PC-3 (cell line): ENCODE measurements at regions of chr7 and their contacts with region 1.

Region 1: DNA sequence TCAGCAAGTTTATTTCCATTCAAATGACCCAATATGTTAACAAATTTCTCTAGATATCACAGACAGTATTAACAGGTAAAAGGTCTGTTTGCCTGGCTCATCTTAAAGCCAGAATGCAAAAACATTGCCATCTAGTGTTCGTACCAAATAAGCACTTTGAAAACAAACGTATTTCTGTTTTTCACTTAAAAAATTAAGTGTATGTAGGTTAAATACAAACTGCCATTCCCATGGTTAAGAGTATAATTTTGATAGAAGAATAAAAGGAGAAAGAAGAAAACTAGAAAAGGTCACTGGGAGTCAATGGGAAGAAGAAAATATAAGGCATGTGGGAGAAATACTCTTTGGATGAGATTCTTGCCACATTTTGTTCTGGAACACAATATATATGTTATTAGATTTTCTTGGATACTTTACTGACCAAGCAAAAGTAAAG is 51.0 kb downstream of the ORC5 start:
- DNase-seq: peak; percentile 61
- ATAC-seq: 0 out of 2 replicates have a peak, but pooled peaks have one; percentile 45
- H3K4me3 ChIP-seq: no peak overlapping the region
- H3K27ac ChIP-seq: no peak overlapping the region
- H3K4me1 ChIP-seq: no peaks in the 10 kb centered on the region
- H3K27me3 ChIP-seq: no peaks in the 10 kb centered on the region
- CTCF ChIP-seq: peak; percentile 84

Region 2: GRCh38 chr7:103296901-103297836 is 859.7 kb before region 1 on chr7 and contains the start of gene PMPCB:
- CTCF ChIA-PET with region 1: no interaction called
- POLR2A ChIA-PET with region 1: no interaction called
- intact Hi-C with region 1: loop called (anchors 10 kb)
- DNase-seq: peak; percentile 91
- ATAC-seq: peak; percentile 90
- H3K4me3 ChIP-seq: peak within 1 kb of the TSS; percentile 93
- H3K27ac ChIP-seq: peak within 1 kb of the TSS; percentile 39
- H3K4me1 ChIP-seq: peaks cover 12% of the 10 kb centered on the region
- H3K27me3 ChIP-seq: no peaks in the 10 kb centered on the region
- CTCF ChIP-seq: peak; percentile 86
- total RNA-seq, gene PMPCB: 49.6 and 64.4 TPM in 2 replicates

Region 3: DNA sequence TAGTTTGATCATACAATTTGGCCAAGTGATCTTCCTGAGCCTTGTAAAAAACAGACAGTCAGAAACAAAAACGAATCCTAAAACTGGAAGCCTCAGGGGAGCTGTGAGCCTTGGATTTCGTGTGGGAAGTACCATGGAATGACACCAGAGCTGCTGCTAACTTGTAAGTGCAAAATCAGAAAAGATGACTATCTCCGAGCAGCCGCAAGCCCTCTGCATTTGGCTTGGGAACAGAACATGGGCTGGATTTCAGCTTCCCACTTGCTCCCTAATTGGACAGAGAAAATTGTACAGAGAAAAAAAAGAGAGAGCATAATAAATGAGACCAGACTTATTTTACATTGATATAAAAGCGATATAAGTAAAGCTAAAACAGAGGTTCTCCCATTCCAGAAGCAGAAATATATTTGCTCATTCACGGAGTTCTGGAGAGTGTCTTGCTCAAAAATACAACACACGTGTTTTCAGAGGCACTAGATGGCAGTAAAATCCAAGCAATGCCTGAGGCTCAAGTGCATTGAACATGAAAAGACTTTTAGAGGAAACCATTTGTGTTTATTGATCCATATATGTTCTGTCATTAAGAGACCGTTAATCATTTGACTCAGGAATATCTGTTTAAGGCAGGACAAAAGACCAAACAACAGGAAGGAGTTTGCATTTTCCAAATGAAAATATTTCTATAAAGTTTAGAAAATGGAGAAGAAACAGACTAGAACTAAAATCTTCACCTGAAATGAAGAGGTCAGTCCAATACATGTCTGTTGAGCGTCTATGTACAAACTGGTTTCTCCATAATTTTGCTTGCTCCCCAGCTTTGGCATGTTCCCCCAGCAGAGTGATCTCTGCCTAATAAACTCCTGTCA is 632.6 kb before region 1 on chr7:
- CTCF ChIA-PET with region 1: no interaction called
- POLR2A ChIA-PET with region 1: no interaction called
- intact Hi-C with region 1: loop called (anchors 1 kb)
- DNase-seq: peak; percentile 66
- ATAC-seq: peak; percentile 89
- H3K4me3 ChIP-seq: no peak overlapping the region
- H3K27ac ChIP-seq: no peak overlapping the region
- H3K4me1 ChIP-seq: no peaks in the 10 kb centered on the region
- H3K27me3 ChIP-seq: no peaks in the 10 kb centered on the region
- CTCF ChIP-seq: peak; percentile 73

Region 4: GRCh38 chr7:103660455-103661371 is 496.1 kb before region 1 on chr7:
- CTCF ChIA-PET with region 1: no interaction called
- POLR2A ChIA-PET with region 1: no interaction called
- intact Hi-C with region 1: loop called (anchors 5 kb)
- DNase-seq: peak; percentile 83
- ATAC-seq: peak; percentile 80
- H3K4me3 ChIP-seq: no peak overlapping the region
- H3K27ac ChIP-seq: peak overlapping the region; percentile 56
- H3K4me1 ChIP-seq: peaks cover 15% of the 10 kb centered on the region
- H3K27me3 ChIP-seq: no peaks in the 10 kb centered on the region
- CTCF ChIP-seq: no peak

Region 5: DNA sequence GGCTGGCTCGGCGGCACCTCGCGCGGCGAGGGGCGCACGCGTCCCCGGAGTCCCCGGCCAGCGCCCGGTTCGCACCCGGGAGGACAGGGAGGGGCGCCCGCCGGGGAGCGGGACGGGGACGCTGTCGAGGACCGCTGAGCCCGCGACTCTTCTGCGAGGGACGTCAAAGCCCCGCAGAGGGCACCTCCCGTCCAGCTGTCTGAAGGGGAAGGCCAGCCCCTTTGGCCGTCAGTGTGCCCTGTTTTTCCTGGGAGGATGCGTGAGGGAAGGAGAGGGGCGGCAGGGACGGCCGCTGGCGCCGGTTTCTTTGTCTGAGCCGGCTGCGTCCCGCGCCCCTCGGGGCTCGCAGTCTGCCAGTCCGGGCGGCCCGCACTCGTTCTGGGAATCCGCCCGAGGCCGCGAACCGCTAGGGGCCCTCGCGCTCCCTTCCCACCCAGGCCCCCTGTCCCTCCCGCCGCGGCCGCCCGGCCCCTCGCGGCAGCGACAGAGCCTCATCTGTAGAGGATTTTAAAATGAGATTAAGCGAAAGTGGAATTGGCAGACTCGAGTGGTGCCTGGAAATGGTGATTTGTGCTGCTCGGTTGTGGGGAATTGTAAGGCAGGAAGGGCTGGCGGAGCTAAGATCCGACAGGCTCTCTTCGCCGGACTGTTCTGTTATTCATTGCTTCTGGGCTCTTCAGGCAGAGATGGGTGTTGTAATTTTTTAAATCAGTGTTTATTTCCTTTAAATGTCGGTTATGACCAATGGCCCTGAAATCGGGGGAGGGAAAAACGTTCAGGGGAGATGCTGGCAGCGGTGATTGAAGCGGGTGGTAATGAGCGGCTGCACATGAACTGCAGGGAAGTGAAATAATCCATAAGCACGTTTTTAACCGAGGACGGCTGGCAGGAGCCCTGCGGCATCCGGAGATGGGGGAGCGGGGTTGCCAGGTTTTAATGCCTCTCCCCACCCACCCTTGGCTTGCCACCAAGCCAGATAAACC is 166.8 kb before region 1 on chr7:
- CTCF ChIA-PET with region 1: no interaction called
- POLR2A ChIA-PET with region 1: no interaction called
- intact Hi-C with region 1: loop called (anchors 10 kb)
- DNase-seq: peak; percentile 11
- ATAC-seq: peak; percentile 50
- H3K4me3 ChIP-seq: peak overlapping the region; percentile 67
- H3K27ac ChIP-seq: no peak overlapping the region
- H3K4me1 ChIP-seq: no peaks in the 10 kb centered on the region
- H3K27me3 ChIP-seq: peaks cover 43% of the 10 kb centered on the region
- CTCF ChIP-seq: peak; percentile 21; the same call in 1 of the 2 replicates

Region 6: GRCh38 chr7:104126411-104126841 is 30.4 kb before region 1 on chr7:
- CTCF ChIA-PET with region 1: no interaction called
- POLR2A ChIA-PET with region 1: no interaction called
- intact Hi-C with region 1: no loop called
- DNase-seq: no peak
- ATAC-seq: no peak
- H3K4me3 ChIP-seq: no peak overlapping the region
- H3K27ac ChIP-seq: no peak overlapping the region
- H3K4me1 ChIP-seq: no peaks in the 10 kb centered on the region; the same call in 1 of the 2 replicates
- H3K27me3 ChIP-seq: no peaks in the 10 kb centered on the region
- CTCF ChIP-seq: no peak